ENCODE measurements at regions of chr6 and their contacts with region 1.

Region 1: GRCh38 chr6:13328076-13328874 is at the start of gene TBC1D7:
- DNase-seq: peak; percentile 94
- H3K4me3 Mint-ChIP-seq: peak within 1 kb of the TSS; percentile 93
- H3K27ac Mint-ChIP-seq: peak within 1 kb of the TSS; percentile 89
- H3K4me1 Mint-ChIP-seq: peaks cover 29% of the 10 kb centered on the region
- H3K27me3 Mint-ChIP-seq: no peaks in the 10 kb centered on the region
- total RNA-seq, gene TBC1D7: 18.7 to 19.1 TPM

Region 2: DNA sequence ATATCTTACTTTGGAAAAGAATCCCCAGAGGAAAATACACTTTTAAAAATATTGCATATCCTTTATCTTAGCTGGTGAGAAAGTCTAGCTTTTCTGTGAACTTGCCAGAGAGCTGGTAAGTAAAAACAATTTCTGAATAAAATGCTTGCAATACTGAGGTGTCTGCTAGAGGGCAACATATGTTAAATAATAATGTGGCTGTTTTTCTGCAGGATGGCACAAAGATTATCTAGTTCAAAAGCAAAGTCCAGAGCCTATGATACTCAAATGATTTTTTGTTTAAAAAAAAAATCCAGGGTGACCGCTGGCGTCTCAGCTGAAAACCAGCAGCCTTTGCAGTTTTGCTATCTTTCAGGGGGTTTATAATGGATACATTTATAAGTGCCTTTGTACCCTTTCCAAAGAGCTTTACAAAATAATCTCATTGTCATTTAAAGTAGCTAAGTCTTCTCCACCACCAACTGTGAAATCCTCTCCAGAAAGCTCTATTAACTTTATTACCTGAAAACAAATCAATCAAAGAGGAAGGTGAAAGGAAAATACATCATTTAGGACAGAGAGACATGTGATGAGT is 416.8 kb before region 1 on chr6:
- CTCF ChIA-PET with region 1: interaction called, 35 read pairs
- POLR2A ChIA-PET with region 1: interaction called, 5 read pairs
- DNase-seq: no peak
- H3K4me3 Mint-ChIP-seq: no peak overlapping the region
- H3K27ac Mint-ChIP-seq: no peak overlapping the region
- H3K4me1 Mint-ChIP-seq: no peaks in the 10 kb centered on the region
- H3K27me3 Mint-ChIP-seq: peaks cover 16% of the 10 kb centered on the region

Region 3: GRCh38 chr6:13239530-13240455 is 88.5 kb before region 1 on chr6:
- CTCF ChIA-PET with region 1: no interaction called
- POLR2A ChIA-PET with region 1: no interaction called
- DNase-seq: no peak
- H3K4me3 Mint-ChIP-seq: no peak overlapping the region
- H3K27ac Mint-ChIP-seq: no peak overlapping the region
- H3K4me1 Mint-ChIP-seq: no peaks in the 10 kb centered on the region
- H3K27me3 Mint-ChIP-seq: peaks cover 25% of the 10 kb centered on the region

Region 4: GRCh38 chr6:13261464-13261994 is 66.7 kb before region 1 on chr6:
- CTCF ChIA-PET with region 1: no interaction called
- POLR2A ChIA-PET with region 1: no interaction called
- DNase-seq: no peak
- H3K4me3 Mint-ChIP-seq: no peak overlapping the region
- H3K27ac Mint-ChIP-seq: no peak overlapping the region
- H3K4me1 Mint-ChIP-seq: no peaks in the 10 kb centered on the region
- H3K27me3 Mint-ChIP-seq: peaks cover 2% of the 10 kb centered on the region

Region 5: GRCh38 chr6:13302751-13303667 is 25.3 kb before region 1 on chr6:
- CTCF ChIA-PET with region 1: interaction called, 14 read pairs
- POLR2A ChIA-PET with region 1: interaction called, 32 read pairs
- DNase-seq: peak; percentile 59
- H3K4me3 Mint-ChIP-seq: no peak overlapping the region
- H3K27ac Mint-ChIP-seq: peak overlapping the region; percentile 70
- H3K4me1 Mint-ChIP-seq: peaks cover 26% of the 10 kb centered on the region
- H3K27me3 Mint-ChIP-seq: no peaks in the 10 kb centered on the region

Region 6: GRCh38 chr6:13308332-13308731 is 19.9 kb before region 1 on chr6:
- CTCF ChIA-PET with region 1: interaction called, 14 read pairs
- POLR2A ChIA-PET with region 1: interaction called, 32 read pairs
- DNase-seq: no peak
- H3K4me3 Mint-ChIP-seq: no peak overlapping the region
- H3K27ac Mint-ChIP-seq: no peak overlapping the region
- H3K4me1 Mint-ChIP-seq: peaks cover 11% of the 10 kb centered on the region
- H3K27me3 Mint-ChIP-seq: no peaks in the 10 kb centered on the region

Region 7: DNA sequence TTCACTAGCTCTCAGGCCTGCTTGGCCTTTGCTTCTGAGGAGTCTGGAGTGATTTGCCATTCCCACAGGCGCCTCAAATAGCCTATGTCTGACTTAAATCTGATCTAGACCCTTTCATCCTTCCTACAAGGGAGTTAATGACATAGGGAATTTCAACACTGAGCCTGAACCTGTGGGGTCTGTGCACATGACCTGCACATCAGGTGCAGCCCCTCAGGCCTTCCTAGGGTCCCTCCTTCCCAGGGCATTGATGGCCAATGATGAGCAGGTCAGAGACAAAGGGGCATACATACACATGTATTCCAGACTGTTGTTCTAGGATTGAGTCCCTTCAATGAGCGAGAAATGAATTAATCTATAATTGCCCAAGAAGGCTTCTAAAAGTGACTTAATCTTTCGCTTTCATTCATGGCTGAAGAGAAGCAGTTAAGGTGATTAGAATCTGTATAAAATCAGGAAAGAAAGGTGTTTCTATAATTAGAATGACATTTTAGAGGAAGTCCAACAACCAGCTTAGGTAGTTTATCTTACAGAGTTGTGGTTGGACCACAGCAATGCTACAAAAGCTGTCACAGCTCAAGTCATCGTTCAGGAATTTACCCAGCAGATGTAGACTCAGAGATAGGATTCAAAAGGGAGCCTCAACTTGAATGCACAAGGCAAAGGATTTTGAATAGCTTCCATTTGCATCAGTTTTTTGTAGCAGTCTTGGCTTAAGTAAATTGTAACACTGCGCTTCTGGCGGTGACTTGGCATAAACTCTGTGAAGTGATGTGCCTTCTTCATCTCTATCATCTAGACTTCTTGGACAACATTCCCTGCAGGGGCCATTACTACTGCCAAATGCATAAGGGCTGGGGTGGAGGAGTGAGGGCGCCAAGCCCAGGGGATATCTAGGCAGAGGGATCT is 27.0 kb after region 1 on chr6:
- CTCF ChIA-PET with region 1: interaction called, 11 read pairs
- POLR2A ChIA-PET with region 1: interaction called, 25 read pairs
- DNase-seq: peak; percentile 28
- H3K4me3 Mint-ChIP-seq: peak overlapping the region; percentile 63
- H3K27ac Mint-ChIP-seq: peak overlapping the region; percentile 98
- H3K4me1 Mint-ChIP-seq: peaks cover 44% of the 10 kb centered on the region
- H3K27me3 Mint-ChIP-seq: no peaks in the 10 kb centered on the region

Region 8: DNA sequence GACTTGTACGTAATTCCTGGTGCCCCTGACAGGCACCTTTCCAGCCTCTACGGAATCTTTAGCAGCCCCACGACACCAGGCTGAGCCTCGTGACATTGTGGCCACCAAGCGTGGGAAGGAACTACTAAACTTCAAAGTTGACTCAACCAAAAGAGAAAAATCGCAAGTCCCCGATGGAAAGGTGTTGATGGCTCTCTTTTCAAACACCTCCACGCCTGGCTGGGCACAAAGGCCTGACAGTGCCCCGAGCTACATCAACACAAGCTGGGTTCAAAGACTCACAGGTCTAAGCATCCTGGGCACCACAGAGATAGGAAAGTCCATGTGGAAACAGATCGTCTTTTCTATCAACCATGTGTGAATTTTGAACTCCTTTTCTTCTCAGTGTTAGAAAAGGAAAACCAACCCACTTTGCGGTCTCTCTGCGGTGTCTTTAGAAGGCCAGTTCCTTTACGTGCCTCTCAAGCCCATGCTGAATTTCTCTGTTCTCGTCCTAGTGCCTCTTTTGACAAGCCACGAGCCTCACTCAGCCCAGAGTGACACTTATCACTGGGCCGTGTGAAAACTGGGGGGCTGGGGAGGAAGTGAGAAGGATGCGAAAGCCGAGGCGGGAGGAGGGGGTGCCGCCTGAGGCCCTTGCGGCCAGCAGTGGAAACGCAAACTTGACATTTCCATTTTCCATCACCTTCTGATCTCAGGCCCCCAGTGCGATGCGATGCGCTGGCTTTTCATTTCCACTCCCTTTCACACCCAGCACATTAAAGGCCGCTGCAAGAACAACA is 99.7 kb after region 1 on chr6:
- CTCF ChIA-PET with region 1: interaction called, 4 read pairs
- POLR2A ChIA-PET with region 1: interaction called, 12 read pairs
- DNase-seq: peak; percentile 73
- H3K4me3 Mint-ChIP-seq: peak overlapping the region; percentile 43
- H3K27ac Mint-ChIP-seq: peak overlapping the region; percentile 65
- H3K4me1 Mint-ChIP-seq: peaks cover 51% of the 10 kb centered on the region
- H3K27me3 Mint-ChIP-seq: no peaks in the 10 kb centered on the region

Region 9: DNA sequence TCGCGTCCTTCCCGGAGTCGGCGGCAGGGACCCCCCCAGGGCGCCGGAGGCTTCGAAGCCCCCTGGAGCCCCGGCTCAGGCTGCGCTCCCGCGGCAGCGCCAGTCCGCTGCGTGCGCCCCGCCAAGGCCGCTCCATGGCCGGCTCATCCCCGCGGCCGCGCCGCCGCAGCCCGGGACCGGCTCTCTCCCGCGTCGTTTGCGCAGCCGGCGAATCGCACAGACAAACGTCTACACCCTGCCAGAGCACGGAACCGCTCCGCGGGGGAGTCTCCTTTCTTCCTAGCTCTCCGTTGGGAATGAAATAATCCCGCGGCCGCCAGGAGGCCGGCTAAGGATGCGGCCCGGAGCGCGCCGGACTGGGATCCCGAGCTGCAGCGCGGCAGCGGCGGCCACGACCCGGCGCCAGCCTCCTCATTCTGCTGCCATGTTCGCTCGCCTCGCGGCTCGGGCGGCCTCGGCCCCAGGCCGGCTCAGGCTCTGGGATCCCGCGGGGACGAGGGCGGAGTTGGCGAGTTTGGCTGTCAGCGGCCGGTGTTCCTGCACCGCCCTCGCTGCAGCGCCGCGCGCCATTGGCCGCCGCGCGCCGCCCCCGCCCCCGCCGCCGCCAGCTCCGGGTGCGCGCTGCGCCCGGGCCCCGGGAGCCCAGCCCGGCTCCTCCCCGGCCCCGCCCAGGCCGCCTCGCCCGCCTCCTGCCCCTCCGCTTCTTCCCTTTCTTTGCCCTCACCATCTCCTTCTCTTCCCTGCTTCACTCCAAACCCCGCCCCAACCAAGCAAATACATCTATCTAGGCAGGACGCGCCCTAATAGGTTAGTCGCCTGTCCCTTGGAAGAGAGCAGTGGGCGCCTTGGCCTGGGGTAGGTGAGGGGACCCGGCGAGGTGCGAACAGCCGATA is 159.1 kb after region 1 on chr6 and contains the start of gene GFOD1:
- CTCF ChIA-PET with region 1: interaction called, 4 read pairs
- POLR2A ChIA-PET with region 1: interaction called, 10 read pairs
- DNase-seq: peak; percentile 81
- H3K4me3 Mint-ChIP-seq: peak within 1 kb of the TSS; percentile 79
- H3K27ac Mint-ChIP-seq: peak within 1 kb of the TSS; percentile 52
- H3K4me1 Mint-ChIP-seq: peaks cover 41% of the 10 kb centered on the region
- H3K27me3 Mint-ChIP-seq: peaks cover 24% of the 10 kb centered on the region
- total RNA-seq, gene GFOD1: 3.0 TPM